Posterior cingulate gyrus (tissue), 11 donors: ENCODE measurements at regions of chr12 and their contacts with region 1.

Region 1: GRCh38 chr12:62793256-62794217 is 141.4 kb downstream of the PPM1H start:
- DNase-seq: peak; percentile 73 to 96 (median 90)

Region 2: DNA sequence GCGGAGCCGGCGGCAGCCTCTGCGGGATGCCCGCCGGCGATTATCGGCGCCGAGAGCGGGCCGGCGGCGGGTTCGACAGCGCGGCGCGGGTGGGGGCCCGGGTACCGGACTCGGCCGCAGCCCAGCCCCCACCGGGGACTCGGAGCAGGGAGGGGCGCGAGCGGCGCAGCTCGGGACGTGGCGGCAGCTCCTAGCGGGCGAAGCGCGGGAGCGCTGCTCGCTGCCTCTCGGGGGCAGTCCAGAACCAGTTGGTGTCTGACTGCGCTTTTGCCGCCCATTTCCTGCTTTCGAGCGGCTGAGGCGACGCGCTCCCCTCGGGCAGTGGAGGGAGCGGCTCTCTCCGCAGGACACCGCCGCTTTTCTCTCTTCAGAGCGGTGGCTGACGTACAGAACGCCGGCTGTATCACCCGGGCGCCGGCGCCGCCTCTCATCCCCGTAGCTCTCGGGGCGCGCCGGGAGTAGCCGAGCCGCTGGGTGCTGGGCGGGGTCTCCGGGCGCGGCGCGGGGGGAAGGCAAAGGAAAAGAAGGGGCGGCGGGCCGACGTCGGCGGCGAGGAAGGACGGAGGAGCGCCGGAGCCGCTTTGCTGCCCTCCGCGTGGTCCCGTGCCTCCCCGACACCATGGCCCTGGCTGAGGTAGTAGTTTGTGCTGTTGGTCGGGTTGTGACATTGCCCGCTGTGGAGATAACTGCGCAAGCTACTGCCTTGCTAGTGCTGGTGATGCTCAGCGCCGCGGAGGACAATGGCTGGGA is 190.3 kb before region 1 on chr12:
- intact Hi-C with region 1: loop called (anchors 1 kb)
- DNase-seq: peak; percentile 76 to 99 (median 88)